ENCODE measurements at regions of chr7 and their contacts with region 1.

Region 1: DNA sequence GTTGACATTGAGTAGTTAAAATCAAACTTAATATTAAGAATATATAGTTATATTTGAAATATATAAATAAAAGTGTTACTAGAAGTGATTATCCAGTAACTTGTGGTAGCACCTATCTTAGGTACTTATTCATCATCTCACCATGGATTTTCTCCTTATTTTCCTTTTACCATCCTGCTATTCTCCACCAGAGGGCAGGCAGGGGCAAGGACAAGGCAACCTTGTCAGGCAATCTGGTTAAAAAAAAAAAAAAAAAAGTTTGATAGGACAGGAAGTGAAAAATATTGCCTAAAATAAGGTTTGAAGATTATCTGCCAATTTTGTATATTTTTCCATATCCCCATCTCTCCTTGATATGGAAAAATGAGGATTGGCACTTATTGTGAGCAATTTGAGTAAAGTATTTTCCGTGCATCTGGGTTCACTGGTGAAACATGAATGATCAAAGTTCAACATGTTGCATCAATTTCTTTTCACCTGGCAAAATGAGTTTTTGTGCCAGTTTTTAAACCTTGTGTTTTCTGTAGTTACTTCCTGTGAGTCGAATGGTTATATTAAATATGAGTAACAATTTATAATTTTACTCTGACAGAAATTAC is 256.7 kb downstream of the AGMO start:
- DNase-seq: no peak
- ATAC-seq: no peak

Region 2: GRCh38 chr7:14717816-14718215 is 587.3 kb before region 1 on chr7:
- intact Hi-C with region 1: loop called (anchors 10 kb)
- DNase-seq: no peak
- ATAC-seq: no peak

Region 3: GRCh38 chr7:15214976-15215375 is 90.1 kb before region 1 on chr7:
- intact Hi-C with region 1: no loop called
- DNase-seq: no peak
- ATAC-seq: no peak

Region 4: DNA sequence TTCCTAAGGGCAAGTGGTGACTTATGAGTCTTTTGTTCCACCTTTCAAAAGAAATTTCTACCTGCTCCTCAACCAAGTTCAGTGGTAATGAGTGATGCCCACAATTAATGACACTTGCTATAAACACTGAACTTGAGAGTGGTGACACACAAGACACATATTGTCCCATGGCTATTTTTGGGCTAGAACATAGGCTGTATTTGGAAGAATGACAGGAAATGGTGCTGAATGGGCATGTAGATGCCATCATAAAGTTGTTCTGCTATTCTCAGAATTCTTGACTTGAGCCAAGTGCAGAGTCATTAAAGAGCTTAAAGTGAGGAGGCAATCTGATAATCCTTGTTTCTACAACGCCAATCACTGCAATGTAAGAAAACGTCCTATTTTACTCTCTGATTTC is 56.6 kb before region 1 on chr7:
- intact Hi-C with region 1: no loop called
- DNase-seq: no peak
- ATAC-seq: no peak

Region 5: DNA sequence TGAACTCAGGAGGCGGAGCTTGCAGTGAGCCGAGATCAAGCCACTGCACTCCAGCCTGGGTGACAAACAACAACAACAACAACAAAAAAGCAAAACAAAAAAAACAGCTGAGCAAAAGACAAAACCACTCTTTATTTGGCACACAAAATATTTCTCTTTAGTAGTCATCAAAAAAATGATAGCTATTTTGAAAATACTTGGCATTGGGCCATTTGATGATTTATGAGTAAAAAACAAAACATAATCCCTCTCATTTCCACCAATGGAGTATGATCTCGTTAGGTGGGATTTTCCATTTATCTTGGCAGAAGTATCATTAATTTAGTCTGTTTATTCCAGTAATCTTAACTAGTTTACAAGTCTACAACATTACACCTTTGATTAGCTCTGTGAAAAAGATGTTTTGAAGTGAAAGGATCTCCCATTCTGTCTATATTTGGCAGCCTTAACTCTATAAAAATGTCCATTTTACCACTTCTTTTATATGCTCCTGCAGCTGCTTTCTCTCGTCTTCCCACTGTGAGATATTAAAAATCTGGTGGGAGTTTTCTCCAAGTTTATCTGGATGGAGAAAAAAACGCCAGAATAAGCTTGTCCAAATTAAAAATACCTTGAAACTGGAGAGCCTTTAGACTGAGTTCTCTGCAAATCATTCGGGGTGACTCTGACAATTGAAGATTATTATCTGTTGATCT is 315.5 kb after region 1 on chr7:
- intact Hi-C with region 1: no loop called
- DNase-seq: no peak
- ATAC-seq: no peak

Region 6: GRCh38 chr7:15720849-15721471 is 415.9 kb after region 1 on chr7:
- intact Hi-C with region 1: loop called (anchors 5 kb)
- DNase-seq: no peak
- ATAC-seq: no peak

Measured in Right ventricle myocardium inferior (tissue), 1 donor.